Activated CD4-positive, alpha-beta T cell treated with anti-CD3 and anti-CD28 coated beads for 36 hours (primary cell): ENCODE measurements at regions of chr7 and their contacts with region 1.

Region 1: GRCh38 chr7:151519765-151520418 is at the start of gene RHEB:
- DNase-seq: peak; percentile 99
- ATAC-seq: peak; percentile 90
- H3K4me3 Mint-ChIP-seq: peak within 1 kb of the TSS; percentile 84
- H3K27ac Mint-ChIP-seq: peak within 1 kb of the TSS; percentile 97
- H3K4me1 Mint-ChIP-seq: peaks cover 35% of the 10 kb centered on the region
- H3K27me3 Mint-ChIP-seq: no peaks in the 10 kb centered on the region
- total RNA-seq, gene RHEB: 42.8 to 43.0 TPM

Region 2: DNA sequence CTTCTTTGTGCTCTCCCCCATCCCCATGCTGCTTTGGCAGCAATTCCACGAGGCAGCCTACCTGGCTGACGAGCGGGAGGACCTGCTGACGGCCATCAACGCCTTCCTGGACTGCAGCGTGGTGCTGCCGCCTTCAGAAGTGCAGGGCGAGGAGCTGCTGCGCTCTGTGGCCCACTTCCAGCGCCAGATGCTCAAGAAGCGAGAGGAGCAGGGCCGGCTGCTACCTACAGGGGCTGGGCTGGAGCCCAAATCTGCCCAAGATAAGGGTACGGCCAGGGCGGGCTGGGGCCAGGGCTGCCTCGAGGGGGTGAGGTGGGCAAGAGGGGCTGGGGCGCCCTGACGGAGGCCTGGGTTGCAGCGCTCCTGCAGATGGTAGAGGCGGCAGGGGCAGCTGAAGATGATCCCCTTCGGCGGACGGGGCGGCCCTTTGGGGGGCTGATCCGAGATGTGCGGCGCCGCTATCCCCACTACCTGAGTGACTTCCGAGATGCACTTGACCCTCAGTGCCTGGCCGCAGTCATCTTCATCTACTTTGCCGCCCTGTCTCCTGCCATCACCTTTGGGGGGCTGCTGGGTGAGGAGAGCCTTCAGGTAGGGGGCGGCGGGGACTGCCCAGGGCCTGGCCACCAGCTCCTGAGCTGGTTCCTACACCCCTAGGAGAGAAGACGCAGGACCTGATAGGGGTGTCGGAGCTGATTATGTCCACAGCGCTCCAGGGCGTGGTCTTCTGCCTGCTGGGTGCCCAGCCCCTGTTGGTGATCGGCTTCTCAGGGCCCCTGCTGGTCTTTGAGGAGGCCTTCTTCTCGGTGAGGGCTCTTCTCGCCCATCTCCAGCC is 448.6 kb before region 1 on chr7:
- CTCF ChIA-PET with region 1: no interaction called
- POLR2A ChIA-PET with region 1: interaction called, 10 read pairs
- intact Hi-C with region 1: no loop called
- DNase-seq: no peak
- ATAC-seq: no peak
- H3K4me3 Mint-ChIP-seq: no peak overlapping the region
- H3K27ac Mint-ChIP-seq: no peak overlapping the region
- H3K4me1 Mint-ChIP-seq: no peaks in the 10 kb centered on the region
- H3K27me3 Mint-ChIP-seq: no peaks in the 10 kb centered on the region

Region 3: GRCh38 chr7:151195616-151196450 is 324.1 kb before region 1 on chr7:
- CTCF ChIA-PET with region 1: no interaction called
- POLR2A ChIA-PET with region 1: no interaction called
- intact Hi-C with region 1: no loop called
- DNase-seq: no peak
- ATAC-seq: no peak
- H3K4me3 Mint-ChIP-seq: no peak overlapping the region
- H3K27ac Mint-ChIP-seq: no peak overlapping the region
- H3K4me1 Mint-ChIP-seq: peaks cover 3% of the 10 kb centered on the region
- H3K27me3 Mint-ChIP-seq: peaks cover 5% of the 10 kb centered on the region

Region 4: GRCh38 chr7:151232091-151232916 is 287.6 kb before region 1 on chr7 and contains the start of gene CHPF2:
- CTCF ChIA-PET with region 1: no interaction called
- POLR2A ChIA-PET with region 1: no interaction called
- intact Hi-C with region 1: loop called in 1 of 2 experiments (anchors 1 kb)
- DNase-seq: peak; percentile 95
- ATAC-seq: peak; percentile 90
- H3K4me3 Mint-ChIP-seq: peak within 1 kb of the TSS; percentile 98
- H3K27ac Mint-ChIP-seq: peak within 1 kb of the TSS; percentile 99
- H3K4me1 Mint-ChIP-seq: peaks cover 34% of the 10 kb centered on the region
- H3K27me3 Mint-ChIP-seq: no peaks in the 10 kb centered on the region
- total RNA-seq, gene CHPF2: 20.7 to 27.3 TPM

Region 5: GRCh38 chr7:151368136-151368571 is 151.7 kb before region 1 on chr7:
- CTCF ChIA-PET with region 1: no interaction called
- POLR2A ChIA-PET with region 1: no interaction called
- intact Hi-C with region 1: no loop called
- DNase-seq: peak; percentile 88
- ATAC-seq: peak; percentile 100
- H3K4me3 Mint-ChIP-seq: no peak overlapping the region
- H3K27ac Mint-ChIP-seq: no peak overlapping the region
- H3K4me1 Mint-ChIP-seq: peaks cover 10% of the 10 kb centered on the region
- H3K27me3 Mint-ChIP-seq: no peaks in the 10 kb centered on the region

Region 6: DNA sequence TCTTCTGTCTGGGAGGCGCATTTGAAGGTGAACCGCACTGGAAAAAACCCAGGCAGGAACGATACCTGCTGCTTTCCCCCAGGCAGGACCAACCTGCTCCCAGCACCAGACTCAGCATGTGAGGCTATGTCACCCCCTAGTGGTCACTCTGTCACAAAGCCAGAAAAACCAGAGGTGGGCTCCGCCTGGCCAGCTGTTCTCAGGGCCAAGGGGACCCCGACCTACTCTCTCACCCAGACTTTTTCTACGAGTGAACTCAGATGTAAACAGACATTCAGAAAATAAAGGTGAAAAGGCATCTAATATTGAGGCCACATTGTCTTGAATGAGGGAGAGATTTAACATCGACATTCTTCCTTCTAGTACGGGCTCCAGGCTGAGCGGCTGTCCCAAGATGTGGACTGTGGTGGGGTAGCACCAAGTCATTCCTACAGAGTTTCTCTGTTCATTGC is 239.7 kb after region 1 on chr7:
- CTCF ChIA-PET with region 1: no interaction called
- POLR2A ChIA-PET with region 1: interaction called, 6 read pairs
- intact Hi-C with region 1: loop called (anchors 2 to 5 kb)
- DNase-seq: peak; percentile 75
- ATAC-seq: peak; percentile 40
- H3K4me3 Mint-ChIP-seq: no peak overlapping the region
- H3K27ac Mint-ChIP-seq: no peak overlapping the region
- H3K4me1 Mint-ChIP-seq: peaks cover 25% of the 10 kb centered on the region
- H3K27me3 Mint-ChIP-seq: no peaks in the 10 kb centered on the region

Region 7: DNA sequence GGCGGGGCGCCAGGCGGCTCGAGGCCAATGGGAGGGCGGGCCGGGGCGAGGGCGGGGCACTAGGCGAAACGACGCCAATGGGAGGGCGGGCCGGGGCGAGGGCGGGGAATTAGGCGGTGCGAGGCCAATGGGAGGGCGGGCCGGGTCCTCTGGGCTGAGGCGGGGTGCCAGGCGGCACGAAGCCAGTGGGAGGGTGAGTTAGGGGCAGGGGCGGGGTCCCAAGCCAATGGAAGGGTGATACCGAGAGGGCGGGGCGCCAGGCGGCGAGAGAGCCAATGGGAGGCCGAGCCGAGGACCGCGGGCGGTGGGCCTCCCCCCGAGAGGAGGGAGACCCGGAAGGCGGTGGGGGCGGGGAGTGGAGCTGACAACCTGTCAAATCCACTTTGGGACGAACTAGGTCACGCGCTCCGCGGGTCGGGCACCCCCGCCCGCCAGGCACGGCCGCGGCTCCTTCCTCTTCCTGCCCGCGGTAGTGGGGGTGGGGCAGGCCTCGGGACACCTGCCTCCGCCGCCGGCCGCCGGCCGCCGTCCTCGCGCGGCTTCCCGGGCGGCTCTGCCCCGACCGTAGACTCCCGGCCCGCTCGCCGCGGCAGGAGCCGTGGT is 943.9 kb after region 1 on chr7:
- CTCF ChIA-PET with region 1: no interaction called
- POLR2A ChIA-PET with region 1: no interaction called
- intact Hi-C with region 1: loop called in 1 of 2 experiments (anchors 10 kb)
- DNase-seq: peak; percentile 100
- ATAC-seq: peak; percentile 95
- H3K4me3 Mint-ChIP-seq: peak overlapping the region; percentile 88
- H3K27ac Mint-ChIP-seq: no peak overlapping the region
- H3K4me1 Mint-ChIP-seq: peaks cover 5% of the 10 kb centered on the region
- H3K27me3 Mint-ChIP-seq: no peaks in the 10 kb centered on the region